A549 (cell line): ENCODE measurements at regions of chr10 and their contacts with region 1.

Region 1: DNA sequence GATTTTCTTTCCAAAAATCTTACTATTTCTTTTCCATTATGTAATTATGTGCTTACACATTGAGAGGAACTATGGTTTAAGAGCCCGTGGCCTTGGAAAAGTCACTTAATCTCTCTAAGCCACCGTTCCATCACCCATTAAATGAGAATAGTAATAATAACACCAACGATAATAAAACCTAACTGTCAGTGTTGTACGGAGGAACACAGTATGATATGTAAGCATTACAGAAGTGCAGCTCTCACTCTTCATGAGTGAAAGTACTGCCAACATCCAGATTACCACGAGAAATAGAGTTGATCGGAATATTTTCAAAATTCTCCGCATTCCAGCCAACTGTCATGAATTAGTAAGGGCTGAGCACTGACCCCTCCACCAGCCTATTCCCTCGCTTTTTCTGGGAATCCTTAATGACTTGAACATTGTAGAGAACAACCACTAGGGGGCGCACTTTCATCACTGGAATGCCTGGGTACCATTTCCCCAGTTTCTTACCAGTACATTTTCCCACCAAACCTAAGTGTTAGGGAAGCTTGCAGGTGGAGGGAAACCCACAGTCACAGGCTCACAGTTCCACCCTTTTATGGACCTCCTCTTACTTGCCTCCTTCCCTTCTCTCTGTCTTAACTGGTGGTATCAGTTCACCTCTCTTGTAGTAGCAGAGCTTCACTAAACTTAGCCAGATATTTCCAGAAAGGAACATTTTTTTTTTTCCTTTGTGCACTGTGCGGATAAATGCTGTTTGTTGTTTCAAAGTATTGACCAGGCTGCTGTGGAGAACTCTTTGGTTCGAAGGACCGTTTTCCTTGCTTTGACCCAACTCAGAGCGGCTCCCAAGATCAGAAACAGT is 27.8 kb downstream of the NKX2-3 start:
- DNase-seq: peak; percentile 48 to 70
- ATAC-seq: peak; percentile 81 to 95; a peak in 5 of 6 replicates
- H3K4me3 ChIP-seq: no peak overlapping the region
- H3K27ac ChIP-seq: no peak overlapping the region
- H3K4me1 ChIP-seq: no peaks in the 10 kb centered on the region
- CTCF ChIP-seq: peak; percentile 89
- EP300 ChIP-seq: no peak
- POLR2A ChIP-seq: no peak
- RAD21 ChIP-seq: peak; percentile 72 to 86

Region 2: DNA sequence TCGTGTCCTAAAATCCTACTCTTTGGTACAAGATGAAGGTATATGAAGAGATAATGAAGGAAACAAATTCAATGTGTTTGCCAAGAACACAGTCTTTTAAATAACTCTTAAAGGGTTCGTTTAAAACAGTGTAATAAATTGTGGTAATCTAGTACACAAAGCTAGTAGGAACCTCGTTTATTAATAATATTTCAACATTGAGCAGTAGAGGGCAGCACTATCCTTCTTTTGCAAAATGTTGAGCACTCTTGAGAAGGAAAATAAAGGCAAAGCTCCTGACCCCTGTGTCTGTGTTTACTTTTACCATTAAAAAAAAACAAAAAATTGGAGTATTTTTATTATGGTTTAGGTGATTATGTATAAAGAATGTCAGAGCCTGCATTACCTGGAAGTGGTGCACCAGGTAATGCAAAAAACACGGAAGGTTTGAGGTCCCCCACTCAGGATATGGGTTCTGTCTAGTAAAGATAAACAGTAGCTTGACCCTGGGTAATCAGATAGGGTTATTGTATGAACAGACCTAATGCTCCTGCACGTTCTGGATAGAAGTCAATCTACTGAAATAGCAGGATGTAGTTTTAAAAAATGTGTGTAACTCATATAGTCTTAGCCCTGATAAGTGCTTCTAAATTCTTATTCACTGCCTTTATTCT is 124.4 kb before region 1 on chr10:
- CTCF ChIA-PET with region 1: interaction called, 25 read pairs
- POLR2A ChIA-PET with region 1: no interaction called
- DNase-seq: peak in 1 of 2 experiments; percentile 51
- ATAC-seq: peak; percentile 60 to 80; a peak in 5 of 6 replicates
- H3K4me3 ChIP-seq: no peak overlapping the region
- H3K27ac ChIP-seq: no peak overlapping the region
- H3K4me1 ChIP-seq: peaks cover 4% of the 10 kb centered on the region; the same call in 1 of the 3 replicates
- CTCF ChIP-seq: peak; percentile 85
- EP300 ChIP-seq: no peak
- POLR2A ChIP-seq: no peak
- RAD21 ChIP-seq: peak; percentile 71 to 74

Region 3: GRCh38 chr10:99540657-99541531 is 19.6 kb before region 1 on chr10:
- CTCF ChIA-PET with region 1: interaction called, 74 read pairs
- POLR2A ChIA-PET with region 1: no interaction called
- DNase-seq: peak in 1 of 2 experiments; percentile 64
- ATAC-seq: peak; percentile 83 to 87
- H3K4me3 ChIP-seq: peak overlapping the region; percentile 52
- H3K27ac ChIP-seq: peak overlapping the region in 1 of 2 experiments; percentile 65; a peak in 4 of 6 replicates
- H3K4me1 ChIP-seq: peaks cover 10% of the 10 kb centered on the region
- CTCF ChIP-seq: no peak
- EP300 ChIP-seq: no peak
- POLR2A ChIP-seq: no peak
- RAD21 ChIP-seq: no peak

Region 4: GRCh38 chr10:99573790-99574189 is 13.3 kb after region 1 on chr10:
- CTCF ChIA-PET with region 1: interaction called, 10 read pairs
- POLR2A ChIA-PET with region 1: no interaction called
- DNase-seq: no peak
- ATAC-seq: no peak
- H3K4me3 ChIP-seq: no peak overlapping the region
- H3K27ac ChIP-seq: no peak overlapping the region
- H3K4me1 ChIP-seq: no peaks in the 10 kb centered on the region
- CTCF ChIP-seq: no peak
- EP300 ChIP-seq: no peak
- POLR2A ChIP-seq: no peak
- RAD21 ChIP-seq: no peak

Region 5: DNA sequence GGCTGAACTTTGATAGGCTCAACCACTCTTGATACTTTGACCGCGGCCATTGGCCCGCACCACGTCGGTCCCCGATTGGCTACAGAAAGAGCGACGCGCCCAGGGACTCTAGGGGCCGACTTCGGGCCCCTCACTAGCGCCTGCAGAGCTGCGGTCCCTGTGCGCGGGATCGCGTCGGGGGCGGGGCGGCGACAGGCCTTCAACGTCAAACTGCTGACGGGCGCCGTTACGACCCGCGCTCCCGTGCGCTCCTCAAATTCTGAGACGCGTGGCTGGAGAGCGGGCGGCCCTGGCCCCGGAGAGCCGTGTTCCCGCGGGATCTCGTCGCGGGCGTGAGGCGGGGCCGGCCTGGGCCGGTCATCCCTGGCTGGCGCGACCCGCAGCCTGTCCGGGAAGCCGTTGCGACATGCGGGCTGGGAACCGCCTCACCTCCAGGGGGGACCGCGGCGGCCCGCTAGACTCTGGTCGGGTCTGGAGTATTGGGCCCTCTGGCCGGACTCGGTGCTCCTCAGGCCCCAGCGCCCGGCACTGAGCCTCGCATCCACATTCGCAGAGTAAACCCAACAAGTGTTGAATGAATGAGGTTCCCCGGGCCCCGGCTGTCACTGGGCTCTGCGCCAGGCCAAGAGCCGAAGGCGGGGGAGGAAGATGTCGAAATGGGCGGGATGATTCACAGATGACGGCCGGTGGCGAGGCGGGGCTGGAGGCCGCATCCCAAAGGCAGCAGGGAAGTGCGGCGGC is 60.4 kb after region 1 on chr10:
- CTCF ChIA-PET with region 1: interaction called, 33 read pairs
- POLR2A ChIA-PET with region 1: interaction called, 3 read pairs
- DNase-seq: peak; percentile 84 to 96
- ATAC-seq: peak; percentile 89 to 96
- H3K4me3 ChIP-seq: peak overlapping the region; percentile 55
- H3K27ac ChIP-seq: peak overlapping the region; percentile 95
- H3K4me1 ChIP-seq: peaks cover 27% of the 10 kb centered on the region
- CTCF ChIP-seq: no peak
- EP300 ChIP-seq: no peak
- POLR2A ChIP-seq: peak; percentile 85
- RAD21 ChIP-seq: no peak; a peak in 1 of 5 replicates